PC-3 (cell line): ENCODE measurements at regions of chr3 and their contacts with region 1.

Region 1: GRCh38 chr3:100463002-100463401 is 29.4 kb upstream of the TMEM45A start:
- DNase-seq: peak; percentile 79
- ATAC-seq: peak; percentile 94
- H3K4me3 ChIP-seq: no peak overlapping the region; the same call in 1 of the 2 replicates
- H3K27ac ChIP-seq: no peak overlapping the region
- H3K4me1 ChIP-seq: peaks cover 11% of the 10 kb centered on the region
- H3K27me3 ChIP-seq: no peaks in the 10 kb centered on the region
- CTCF ChIP-seq: peak; percentile 93

Region 2: GRCh38 chr3:100325827-100326226 is 137.2 kb before region 1 on chr3:
- CTCF ChIA-PET with region 1: no interaction called
- POLR2A ChIA-PET with region 1: no interaction called
- intact Hi-C with region 1: no loop called
- DNase-seq: no peak
- ATAC-seq: no peak
- H3K4me3 ChIP-seq: no peak overlapping the region
- H3K27ac ChIP-seq: no peak overlapping the region
- H3K4me1 ChIP-seq: no peaks in the 10 kb centered on the region
- H3K27me3 ChIP-seq: no peaks in the 10 kb centered on the region
- CTCF ChIP-seq: no peak

Region 3: DNA sequence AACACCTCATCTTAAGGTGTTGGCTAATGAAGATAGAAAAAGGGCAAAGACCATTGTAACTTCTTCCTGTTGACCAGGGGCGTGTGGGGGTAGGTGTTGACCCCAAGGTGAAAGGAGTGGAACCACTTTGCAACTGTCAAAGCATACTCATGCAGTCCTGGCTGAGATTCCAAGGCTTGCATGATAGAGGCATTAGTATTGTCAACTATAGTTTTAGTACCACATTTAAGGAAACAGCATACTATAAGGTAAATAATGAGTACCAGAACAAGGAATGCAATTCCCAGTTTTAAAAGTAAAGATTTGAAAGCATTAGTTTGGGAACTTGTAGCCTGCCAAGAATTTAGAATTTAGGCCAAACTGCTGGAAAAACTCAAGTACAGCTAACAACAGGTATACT is 118.6 kb after region 1 on chr3:
- CTCF ChIA-PET with region 1: interaction called, 17 read pairs
- POLR2A ChIA-PET with region 1: interaction called, 4 read pairs
- intact Hi-C with region 1: no loop called
- DNase-seq: peak; percentile 82
- ATAC-seq: peak; percentile 86
- H3K4me3 ChIP-seq: peak overlapping the region; percentile 14; the same call in 1 of the 2 replicates
- H3K27ac ChIP-seq: peak overlapping the region; percentile 69
- H3K4me1 ChIP-seq: peaks cover 50% of the 10 kb centered on the region
- H3K27me3 ChIP-seq: no peaks in the 10 kb centered on the region
- CTCF ChIP-seq: no peak

Region 4: DNA sequence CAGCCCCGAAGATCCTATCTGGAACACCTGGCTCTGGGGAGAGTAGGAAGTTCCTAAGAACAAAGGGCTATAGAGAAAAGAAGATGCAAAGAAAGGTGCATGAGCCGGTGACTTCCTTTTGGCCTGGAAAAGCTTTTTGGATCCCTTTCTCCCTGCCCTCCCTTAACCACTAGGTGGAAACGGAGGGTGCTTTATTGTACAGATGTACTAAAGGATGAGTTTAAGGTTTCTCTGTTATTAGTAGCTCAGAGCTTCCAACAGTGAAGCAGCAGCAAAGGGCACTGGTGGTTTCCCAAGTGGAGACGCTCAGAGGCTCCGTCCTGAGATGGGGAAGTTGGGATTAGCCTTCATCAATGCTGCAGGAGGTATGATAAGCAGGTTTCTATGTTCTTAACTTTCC is 140.5 kb after region 1 on chr3:
- CTCF ChIA-PET with region 1: interaction called, 40 read pairs
- POLR2A ChIA-PET with region 1: no interaction called
- intact Hi-C with region 1: no loop called
- DNase-seq: peak; percentile 80
- ATAC-seq: peak; percentile 88
- H3K4me3 ChIP-seq: no peak overlapping the region
- H3K27ac ChIP-seq: no peak overlapping the region
- H3K4me1 ChIP-seq: peaks cover 17% of the 10 kb centered on the region
- H3K27me3 ChIP-seq: no peaks in the 10 kb centered on the region
- CTCF ChIP-seq: peak; percentile 81

Region 5: GRCh38 chr3:100656945-100657344 is 193.9 kb after region 1 on chr3:
- CTCF ChIA-PET with region 1: no interaction called
- POLR2A ChIA-PET with region 1: no interaction called
- intact Hi-C with region 1: no loop called
- DNase-seq: no peak
- ATAC-seq: no peak
- H3K4me3 ChIP-seq: no peak overlapping the region
- H3K27ac ChIP-seq: no peak overlapping the region
- H3K4me1 ChIP-seq: peaks cover 4% of the 10 kb centered on the region; the same call in 1 of the 2 replicates
- H3K27me3 ChIP-seq: no peaks in the 10 kb centered on the region
- CTCF ChIP-seq: no peak

Region 6: DNA sequence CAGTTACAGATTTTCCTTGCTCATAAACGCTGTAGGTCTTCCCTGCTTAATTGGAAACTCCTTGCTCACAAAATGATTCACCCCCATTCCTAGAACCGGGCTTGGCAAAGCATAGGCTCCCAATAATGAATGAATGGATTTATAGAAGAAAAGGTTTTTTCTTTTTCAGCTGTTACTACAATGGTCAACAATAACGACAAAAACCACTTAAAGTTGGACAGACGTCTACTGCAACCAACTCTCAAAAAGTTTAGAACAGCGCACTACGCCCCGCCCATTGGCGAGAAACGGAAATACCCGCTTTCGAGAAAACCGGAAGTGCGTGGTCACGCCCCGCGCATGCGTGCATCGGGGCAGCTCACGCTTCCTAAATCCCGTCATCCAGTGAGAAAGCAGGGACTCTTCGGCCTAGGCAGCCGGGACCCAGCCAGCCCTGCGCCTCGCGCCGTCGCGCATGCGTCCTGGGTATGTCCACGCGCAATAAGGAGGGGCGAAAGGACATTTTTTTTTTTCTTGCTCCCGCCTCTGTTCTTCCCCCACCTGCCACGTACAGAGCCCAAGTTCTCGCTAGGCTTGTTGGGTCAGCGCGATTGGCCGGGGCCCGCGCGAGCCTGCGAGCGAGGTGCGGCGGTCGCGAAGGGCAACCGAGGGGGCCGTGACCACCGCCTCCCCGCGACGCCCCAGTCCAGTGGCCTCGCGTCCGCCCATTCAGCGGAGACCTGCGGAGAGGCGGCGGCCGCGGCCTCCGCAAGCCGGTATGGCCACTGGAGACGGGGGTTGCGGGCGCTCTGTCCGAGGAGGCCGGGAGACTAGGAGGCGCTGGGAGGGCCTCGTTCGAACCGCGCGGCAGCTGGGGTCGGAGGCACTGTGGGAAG is 246.2 kb after region 1 on chr3 and contains the start of gene TFG:
- CTCF ChIA-PET with region 1: interaction called, 5 read pairs
- POLR2A ChIA-PET with region 1: interaction called, 6 read pairs
- intact Hi-C with region 1: loop called (anchors 2 kb)
- DNase-seq: peak; percentile 100
- ATAC-seq: peak; percentile 89
- H3K4me3 ChIP-seq: peak within 1 kb of the TSS; percentile 80
- H3K27ac ChIP-seq: peak within 1 kb of the TSS; percentile 93
- H3K4me1 ChIP-seq: peaks cover 21% of the 10 kb centered on the region
- H3K27me3 ChIP-seq: no peaks in the 10 kb centered on the region
- CTCF ChIP-seq: no peak
- total RNA-seq, gene TFG: 97.9 and 106 TPM in 2 replicates

Region 7: DNA sequence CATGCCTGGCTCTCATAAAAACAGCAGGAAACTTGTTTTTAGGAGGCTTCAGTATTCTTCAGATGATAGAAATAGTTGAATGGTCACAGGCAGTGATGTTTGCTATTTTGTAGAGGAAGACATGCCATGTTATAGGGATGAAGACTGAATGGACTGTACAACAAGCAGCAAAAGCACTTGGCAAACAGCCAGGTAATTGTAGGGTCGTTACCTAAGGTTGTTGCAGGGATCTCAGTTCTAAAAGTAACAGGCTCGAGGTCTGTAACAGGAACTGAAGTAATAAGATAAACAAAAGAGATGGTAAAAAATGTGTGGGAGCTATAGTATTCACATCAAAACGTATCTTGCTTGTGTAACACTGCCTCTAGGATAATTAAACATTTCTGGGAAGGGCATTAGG is 362.6 kb after region 1 on chr3:
- CTCF ChIA-PET with region 1: no interaction called
- POLR2A ChIA-PET with region 1: no interaction called
- intact Hi-C with region 1: no loop called
- DNase-seq: peak; percentile 10
- ATAC-seq: no peak
- H3K4me3 ChIP-seq: no peak overlapping the region
- H3K27ac ChIP-seq: no peak overlapping the region
- H3K4me1 ChIP-seq: no peaks in the 10 kb centered on the region
- H3K27me3 ChIP-seq: no peaks in the 10 kb centered on the region
- CTCF ChIP-seq: no peak